ENCODE measurements at regions of chr17 and their contacts with region 1.

Region 1: GRCh38 chr17:7887482-7888183 is 956 bp upstream of the CHD3 start:
- DNase-seq: peak; percentile 100
- H3K4me3 ChIP-seq: peak overlapping the region in 2 of 3 experiments; percentile 50 to 76
- H3K27ac ChIP-seq: peak overlapping the region; percentile 94
- H3K4me1 ChIP-seq: peaks cover 42% of the 10 kb centered on the region
- H3K27me3 ChIP-seq: no peaks in the 10 kb centered on the region
- CTCF ChIP-seq: no peak
- POLR2A ChIP-seq: peak; percentile 74

Region 2: DNA sequence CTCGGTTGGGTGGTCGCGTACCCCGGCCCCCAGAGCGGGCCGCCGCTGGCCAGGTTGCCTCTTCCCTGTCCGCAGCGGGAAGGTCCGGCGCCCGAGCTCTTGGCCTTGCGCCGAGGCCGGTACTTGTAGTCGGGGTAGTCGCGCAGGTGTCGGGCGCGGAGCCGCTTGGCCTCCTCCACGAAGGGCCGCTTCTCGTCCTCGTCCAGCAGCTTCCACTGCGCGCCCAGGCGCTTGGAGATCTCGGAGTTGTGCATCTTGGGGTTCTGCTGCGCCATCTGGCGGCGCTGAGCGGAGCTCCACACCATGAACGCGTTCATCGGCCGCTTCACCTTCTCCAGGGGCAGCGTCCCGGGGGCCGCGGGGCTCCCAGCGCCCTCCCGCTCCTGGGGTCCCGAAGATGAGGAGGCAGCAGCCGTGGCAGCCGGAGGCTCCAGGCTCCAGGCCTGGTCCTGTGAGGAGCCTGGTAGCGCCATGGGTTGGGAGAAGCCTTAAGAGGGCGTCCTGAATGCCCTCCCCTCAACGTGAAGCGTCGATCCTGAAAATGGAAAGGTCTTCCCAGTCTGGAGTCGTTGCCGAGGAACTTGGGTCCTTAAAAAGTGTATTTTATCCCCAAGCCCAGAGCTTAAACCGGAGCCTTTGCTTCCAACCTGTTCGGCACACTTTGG is 298.3 kb before region 1 on chr17:
- CTCF ChIA-PET with region 1: no interaction called
- POLR2A ChIA-PET with region 1: no interaction called
- dilution Hi-C with region 1: no loop called
- intact Hi-C with region 1: no loop called
- DNase-seq: peak; percentile 78
- H3K4me3 ChIP-seq: no peak overlapping the region
- H3K27ac ChIP-seq: no peak overlapping the region
- H3K4me1 ChIP-seq: peaks cover 16% of the 10 kb centered on the region
- H3K27me3 ChIP-seq: no peaks in the 10 kb centered on the region
- CTCF ChIP-seq: peak; percentile 94 to 95
- POLR2A ChIP-seq: no peak

Region 3: GRCh38 chr17:7844292-7845154 is 43.1 kb before region 1 on chr17:
- CTCF ChIA-PET with region 1: no interaction called
- POLR2A ChIA-PET with region 1: no interaction called
- dilution Hi-C with region 1: no loop called
- intact Hi-C with region 1: loop called (anchors 1 kb)
- DNase-seq: peak; percentile 92
- H3K4me3 ChIP-seq: peak overlapping the region; percentile 45 to 71 (median 60)
- H3K27ac ChIP-seq: peak overlapping the region; percentile 99
- H3K4me1 ChIP-seq: peaks cover 14% of the 10 kb centered on the region
- H3K27me3 ChIP-seq: no peaks in the 10 kb centered on the region
- CTCF ChIP-seq: no peak
- POLR2A ChIP-seq: peak; percentile 52

Region 4: GRCh38 chr17:7862692-7863437 is 24.8 kb before region 1 on chr17:
- CTCF ChIA-PET with region 1: interaction called, 6 read pairs
- POLR2A ChIA-PET with region 1: no interaction called
- dilution Hi-C with region 1: no loop called
- intact Hi-C with region 1: loop called (anchors 1 kb)
- DNase-seq: peak; percentile 57
- H3K4me3 ChIP-seq: no peak overlapping the region
- H3K27ac ChIP-seq: no peak overlapping the region
- H3K4me1 ChIP-seq: peaks cover 15% of the 10 kb centered on the region
- H3K27me3 ChIP-seq: no peaks in the 10 kb centered on the region
- CTCF ChIP-seq: peak; percentile 46 to 63
- POLR2A ChIP-seq: no peak

Region 5: GRCh38 chr17:7915611-7916382 is 28.2 kb after region 1 on chr17 and contains the start of gene RNF227:
- CTCF ChIA-PET with region 1: no interaction called
- POLR2A ChIA-PET with region 1: no interaction called
- dilution Hi-C with region 1: no loop called
- intact Hi-C with region 1: loop called (anchors 1 kb)
- DNase-seq: peak; percentile 98
- H3K4me3 ChIP-seq: peak within 1 kb of the TSS in 2 of 3 experiments; percentile 24 to 44
- H3K27ac ChIP-seq: peak within 1 kb of the TSS; percentile 19
- H3K4me1 ChIP-seq: peaks cover 16% of the 10 kb centered on the region
- H3K27me3 ChIP-seq: no peaks in the 10 kb centered on the region
- CTCF ChIP-seq: no peak
- POLR2A ChIP-seq: no peak
- total RNA-seq, gene RNF227: 0.58 TPM in 2 replicates

Region 6: GRCh38 chr17:7931709-7932482 is 44.3 kb after region 1 on chr17 and contains the starts of genes CNTROB and TRAPPC1:
- CTCF ChIA-PET with region 1: no interaction called
- POLR2A ChIA-PET with region 1: no interaction called
- dilution Hi-C with region 1: no loop called
- intact Hi-C with region 1: loop called (anchors 1 kb)
- DNase-seq: peak; percentile 99
- H3K4me3 ChIP-seq: peak within 1 kb of the TSS; percentile 74 to 98 (median 96)
- H3K27ac ChIP-seq: peak within 1 kb of the TSS; percentile 66
- H3K4me1 ChIP-seq: peaks cover 23% of the 10 kb centered on the region
- H3K27me3 ChIP-seq: no peaks in the 10 kb centered on the region
- CTCF ChIP-seq: no peak
- POLR2A ChIP-seq: no peak
- total RNA-seq, gene CNTROB: 45.0 and 47.2 TPM in 2 replicates
- total RNA-seq, gene TRAPPC1: 139 and 146 TPM in 2 replicates